Calu3 (cell line): ENCODE measurements at regions of chr4 and their contacts with region 1.

Region 1: DNA sequence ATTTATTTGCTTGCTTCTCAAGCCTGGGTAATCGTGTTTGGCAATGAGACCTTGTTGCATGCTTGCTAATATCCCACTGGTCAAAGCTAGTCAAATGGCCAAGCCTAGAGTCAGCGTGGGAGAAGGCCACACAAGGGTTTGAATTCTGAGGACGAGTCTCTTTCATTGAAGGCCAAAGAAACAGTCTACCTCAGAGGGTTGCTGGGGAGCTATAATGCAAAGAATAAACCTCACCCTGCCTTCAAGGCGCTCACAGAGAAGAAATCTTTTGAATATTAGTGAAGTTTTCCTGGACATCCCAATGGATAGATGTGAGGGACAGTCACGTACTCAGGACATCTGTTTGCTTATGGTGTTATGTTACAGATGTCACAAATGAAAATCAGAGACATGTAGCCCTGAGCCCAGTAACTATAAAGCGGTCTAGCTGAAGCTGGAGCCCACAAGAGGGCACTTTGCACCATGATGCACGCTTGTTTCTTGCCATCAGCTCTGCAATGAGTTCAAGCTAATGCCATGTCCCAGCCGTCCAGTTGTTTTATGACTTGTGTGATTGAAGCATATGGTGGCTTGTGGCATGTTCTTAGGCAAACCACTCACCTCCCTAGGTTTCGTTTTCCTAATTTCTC is 1.1 kb upstream of the TLR3 start:
- DNase-seq: peak; percentile 58
- H3K4me3 Mint-ChIP-seq: no peak overlapping the region
- H3K27ac Mint-ChIP-seq: no peak overlapping the region
- H3K4me1 Mint-ChIP-seq: peaks cover 13% of the 10 kb centered on the region
- H3K27me3 Mint-ChIP-seq: no peaks in the 10 kb centered on the region
- CTCF ChIP-seq: no peak

Region 2: DNA sequence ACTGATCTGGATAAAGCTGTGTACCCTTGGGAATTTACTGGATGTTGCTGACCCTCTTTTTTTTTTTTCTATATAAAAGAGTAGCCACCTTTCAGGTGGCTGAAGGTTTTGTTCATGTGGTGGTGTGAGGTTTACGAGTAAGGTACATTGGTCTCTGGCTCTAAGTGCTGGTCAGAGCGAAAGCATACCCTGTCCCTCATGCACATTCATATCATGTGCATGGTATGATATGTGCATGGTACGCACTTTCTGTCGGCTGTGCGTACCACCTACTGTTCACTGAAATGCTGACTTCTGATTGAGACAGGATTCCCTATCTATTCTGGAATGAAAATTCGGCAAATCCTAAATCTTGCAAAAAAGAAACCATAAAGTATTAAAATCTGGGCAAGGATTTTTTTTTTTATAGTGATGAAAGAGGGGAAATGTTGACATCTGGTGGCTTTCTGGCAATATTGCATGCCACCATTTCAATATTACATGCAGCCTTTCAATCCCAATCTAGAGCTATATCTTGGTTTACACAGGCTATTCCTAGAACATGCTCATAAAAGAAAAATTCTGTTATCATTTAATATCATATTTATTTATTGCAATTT is 69.4 kb after region 1 on chr4:
- CTCF ChIA-PET with region 1: interaction called, 53 read pairs
- intact Hi-C with region 1: loop called (anchors 1 kb)
- DNase-seq: no peak
- H3K4me3 Mint-ChIP-seq: no peak overlapping the region
- H3K27ac Mint-ChIP-seq: no peak overlapping the region
- H3K4me1 Mint-ChIP-seq: peaks cover 13% of the 10 kb centered on the region
- H3K27me3 Mint-ChIP-seq: no peaks in the 10 kb centered on the region
- CTCF ChIP-seq: peak; percentile 45

Region 3: GRCh38 chr4:186201535-186202230 is 133.8 kb after region 1 on chr4:
- CTCF ChIA-PET with region 1: no interaction called
- intact Hi-C with region 1: loop called (anchors 5 kb)
- DNase-seq: peak; percentile 68
- H3K4me3 Mint-ChIP-seq: no peak overlapping the region
- H3K27ac Mint-ChIP-seq: no peak overlapping the region
- H3K4me1 Mint-ChIP-seq: peaks cover 7% of the 10 kb centered on the region
- H3K27me3 Mint-ChIP-seq: no peaks in the 10 kb centered on the region
- CTCF ChIP-seq: peak; percentile 73